ENCODE measurements at regions of chr2 and their contacts with region 1.

Region 1: DNA sequence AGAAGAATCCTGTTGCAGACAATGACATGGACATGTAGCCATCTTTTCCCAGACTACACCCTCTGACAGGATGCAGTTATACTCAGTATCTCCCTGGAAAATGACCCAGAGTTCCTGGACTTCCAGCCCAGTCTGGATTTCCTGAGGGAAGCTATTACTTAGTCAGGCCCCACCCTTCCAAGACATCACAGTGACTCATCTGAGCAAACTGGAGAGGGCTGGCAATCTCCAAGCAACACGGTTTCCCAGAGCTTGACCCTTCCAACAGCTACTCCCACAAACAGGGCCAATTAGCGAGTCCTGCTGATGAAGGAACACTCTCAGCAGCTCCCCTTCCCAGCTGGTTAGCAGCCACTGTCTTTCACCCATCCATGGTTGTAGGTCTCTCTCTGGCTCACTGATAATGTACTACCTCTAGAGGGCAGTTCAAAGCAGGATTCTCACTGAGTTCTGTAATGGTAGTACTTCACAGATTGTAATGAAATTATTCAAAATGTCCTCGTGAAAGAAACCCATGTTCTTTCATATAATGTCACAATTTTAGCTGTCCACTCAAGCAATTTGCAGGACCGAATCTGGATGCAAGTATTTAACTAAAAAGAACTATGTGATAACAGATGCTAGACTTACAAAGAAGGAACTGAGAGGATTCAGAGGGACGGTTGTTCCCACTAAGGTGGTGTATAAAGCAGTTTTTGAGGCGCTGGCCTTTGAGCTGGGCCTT is 110.2 kb downstream of the MDH1 start:
- DNase-seq: peak; percentile 54 to 63
- ATAC-seq: peak; percentile 89 to 93
- H3K4me3 ChIP-seq: no peak overlapping the region
- H3K27ac ChIP-seq: peak overlapping the region; percentile 38 to 73 (median 58)
- H3K4me1 ChIP-seq: peaks cover 16 to 18% of the 10 kb centered on the region in 2 donors
- H3K27me3 ChIP-seq: no peaks in the 10 kb centered on the region
- CTCF ChIP-seq: peak; percentile 22 to 60 (median 42)
- POLR2A ChIP-seq: no peak

Region 2: GRCh38 chr2:63676135-63676534 is 22.9 kb before region 1 on chr2:
- in situ Hi-C with region 1: no loop called
- intact Hi-C with region 1: no loop called
- DNase-seq: no peak
- ATAC-seq: peak in 1 of 2 donors; percentile 25
- H3K4me3 ChIP-seq: no peak overlapping the region
- H3K27ac ChIP-seq: no peak overlapping the region
- H3K4me1 ChIP-seq: peaks cover 6 to 11% of the 10 kb centered on the region in 2 donors
- H3K27me3 ChIP-seq: no peaks in the 10 kb centered on the region
- CTCF ChIP-seq: no peak
- POLR2A ChIP-seq: no peak

Region 3: GRCh38 chr2:63849381-63850203 is 150.6 kb after region 1 on chr2:
- in situ Hi-C with region 1: loop called in 2 of 4 experiments (anchors 10 to 25 kb)
- intact Hi-C with region 1: loop called (anchors 5 kb)
- DNase-seq: no peak
- ATAC-seq: no peak
- H3K4me3 ChIP-seq: peak overlapping the region in 3 of 4 donors; percentile 15 to 21 (median 18)
- H3K27ac ChIP-seq: peak overlapping the region; percentile 77 to 98 (median 96)
- H3K4me1 ChIP-seq: peaks cover 94% of the 10 kb centered on the region in 2 donors
- H3K27me3 ChIP-seq: no peaks in the 10 kb centered on the region
- CTCF ChIP-seq: no peak
- POLR2A ChIP-seq: no peak

Region 4: GRCh38 chr2:63861220-63861822 is 162.3 kb after region 1 on chr2:
- in situ Hi-C with region 1: loop called in 3 of 4 experiments (anchors 10 to 25 kb)
- intact Hi-C with region 1: loop called (anchors 5 kb)
- DNase-seq: no peak
- ATAC-seq: peak in 1 of 2 donors; percentile 52
- H3K4me3 ChIP-seq: no peak overlapping the region
- H3K27ac ChIP-seq: peak overlapping the region; percentile 78 to 97 (median 82)
- H3K4me1 ChIP-seq: peaks cover 52 to 57% of the 10 kb centered on the region in 2 donors
- H3K27me3 ChIP-seq: no peaks in the 10 kb centered on the region
- CTCF ChIP-seq: peak; percentile 15 to 56 (median 52)
- POLR2A ChIP-seq: no peak

Region 5: DNA sequence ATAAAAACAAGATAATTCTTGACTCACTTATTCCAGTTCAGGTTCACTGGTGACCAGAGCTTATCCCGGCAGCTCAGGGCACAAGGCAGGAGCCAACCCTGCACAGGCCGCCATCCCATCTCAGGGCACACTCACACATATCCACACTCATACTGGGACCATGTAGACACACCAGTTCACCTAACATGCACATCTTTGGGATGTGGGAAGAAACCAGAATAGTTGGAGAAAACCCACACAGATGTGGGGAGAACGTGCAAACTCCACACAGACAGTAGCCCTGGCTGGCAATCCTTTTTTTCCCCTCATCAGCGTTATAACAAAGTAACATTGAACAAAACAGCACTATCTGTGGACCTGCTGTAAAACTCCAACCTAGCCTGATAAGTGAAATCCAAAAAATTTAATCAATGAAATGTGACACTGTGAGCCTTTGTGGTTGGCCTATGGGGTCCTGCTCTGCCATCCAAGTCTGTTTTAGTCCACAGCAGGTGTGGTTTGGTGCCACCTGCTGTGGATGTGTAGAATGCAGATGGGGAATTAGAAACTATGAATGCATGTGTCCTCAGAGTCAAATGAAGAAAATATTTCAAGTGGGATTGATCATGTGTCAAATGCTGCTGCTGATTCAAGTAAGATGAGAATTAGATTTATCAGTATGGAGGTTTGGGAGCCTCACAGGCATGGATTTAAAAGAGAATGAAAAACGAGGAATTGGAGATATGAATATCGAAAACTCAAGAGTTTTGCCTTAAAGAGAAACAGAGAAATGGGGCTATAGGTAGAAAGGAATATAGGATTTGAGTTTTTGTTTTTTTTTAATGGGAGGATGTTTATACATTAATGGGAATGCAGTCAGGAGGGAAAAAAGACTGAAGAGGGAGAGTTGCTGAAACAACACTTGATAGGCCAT is 189.8 kb after region 1 on chr2:
- in situ Hi-C with region 1: loop called in 1 of 4 experiments (anchors 10 kb)
- intact Hi-C with region 1: loop called (anchors 2 kb)
- DNase-seq: peak; percentile 40 to 48
- ATAC-seq: peak; percentile 72 to 84
- H3K4me3 ChIP-seq: no peak overlapping the region
- H3K27ac ChIP-seq: peak overlapping the region; percentile 78 to 90 (median 83)
- H3K4me1 ChIP-seq: peaks cover 32 to 44% of the 10 kb centered on the region in 2 donors
- H3K27me3 ChIP-seq: no peaks in the 10 kb centered on the region
- CTCF ChIP-seq: peak; percentile 73 to 85 (median 78)
- POLR2A ChIP-seq: no peak

Region 6: DNA sequence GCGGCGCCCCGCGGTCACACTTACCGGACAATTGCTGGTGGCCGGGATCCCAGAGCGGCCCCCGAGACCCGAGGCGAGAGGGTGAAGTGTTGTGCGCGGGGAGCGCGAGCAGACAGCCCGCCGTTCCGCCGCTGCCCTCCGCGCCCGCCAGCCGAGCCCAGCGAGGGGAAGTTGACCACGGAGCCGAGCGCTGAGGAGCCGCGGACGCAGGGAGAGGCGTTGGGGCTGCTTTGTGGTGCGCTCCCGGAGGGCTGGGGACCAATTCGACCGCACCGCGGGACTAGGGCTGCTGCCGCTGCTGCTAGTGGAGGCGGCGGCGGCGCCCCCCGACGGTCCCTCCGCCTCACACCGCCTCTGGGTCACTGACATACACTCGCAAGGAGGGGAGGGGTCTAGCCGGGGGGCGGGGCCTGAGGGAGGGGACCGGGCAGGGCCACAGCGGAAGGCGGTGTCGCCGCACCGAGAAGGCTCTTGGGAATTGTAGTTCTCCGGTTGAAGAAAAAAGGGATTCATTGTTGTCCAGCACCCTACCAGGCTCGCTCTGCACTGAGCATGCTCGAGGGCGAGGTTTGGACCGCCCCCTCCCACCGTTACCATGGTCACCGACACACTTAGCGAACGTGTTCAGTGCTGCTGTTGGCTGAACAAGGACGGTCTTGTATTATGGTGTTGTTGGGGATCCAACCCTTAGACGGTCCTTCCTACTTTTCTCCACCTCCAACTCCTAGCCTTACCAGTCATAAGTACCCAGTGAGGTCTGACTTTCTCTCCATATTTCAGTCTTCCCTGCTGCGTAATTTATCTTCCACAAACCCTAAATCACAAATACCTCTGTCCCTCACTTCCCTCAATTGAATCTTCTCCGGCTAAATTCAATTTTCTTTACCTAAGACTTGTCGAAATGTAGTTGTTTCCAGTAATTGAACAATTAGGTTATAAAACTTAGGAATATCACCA is 445.3 kb after region 1 on chr2 and contains the start of gene PELI1:
- in situ Hi-C with region 1: loop called in 1 of 4 experiments (anchors 25 kb)
- intact Hi-C with region 1: no loop called
- DNase-seq: peak; percentile 94 to 96
- ATAC-seq: peak; percentile 93 to 95
- H3K4me3 ChIP-seq: peak within 1 kb of the TSS; percentile 83 to 100 (median 95)
- H3K27ac ChIP-seq: peak within 1 kb of the TSS; percentile 91 to 99 (median 96)
- H3K4me1 ChIP-seq: peaks cover 3 to 11% of the 10 kb centered on the region in 2 donors
- H3K27me3 ChIP-seq: no peaks in the 10 kb centered on the region
- CTCF ChIP-seq: peak in 2 of 5 experiments; percentile 13 to 30
- POLR2A ChIP-seq: peak; percentile 94 to 97
- total RNA-seq, gene PELI1: 3.7 to 7.5 (median 5.9) TPM